Panc1 (cell line): ENCODE measurements at regions of chr10 and their contacts with region 1.

Region 1: GRCh38 chr10:66102756-66103155 is 823.1 kb upstream of the LRRTM3 start:
- DNase-seq: no peak
- ATAC-seq: no peak
- H3K4me3 ChIP-seq: no peak overlapping the region
- H3K27ac ChIP-seq: no peak overlapping the region
- H3K4me1 ChIP-seq: no peaks in the 10 kb centered on the region
- H3K27me3 ChIP-seq: no peaks in the 10 kb centered on the region
- CTCF ChIP-seq: no peak

Region 2: GRCh38 chr10:66058594-66058993 is 44.2 kb before region 1 on chr10:
- CTCF ChIA-PET with region 1: interaction called, 10 read pairs
- POLR2A ChIA-PET with region 1: no interaction called
- in situ Hi-C with region 1: no loop called
- intact Hi-C with region 1: no loop called
- DNase-seq: no peak
- ATAC-seq: no peak
- H3K4me3 ChIP-seq: no peak overlapping the region
- H3K27ac ChIP-seq: no peak overlapping the region
- H3K4me1 ChIP-seq: no peaks in the 10 kb centered on the region
- H3K27me3 ChIP-seq: no peaks in the 10 kb centered on the region
- CTCF ChIP-seq: no peak

Region 3: GRCh38 chr10:66120160-66120559 is 17.4 kb after region 1 on chr10:
- CTCF ChIA-PET with region 1: no interaction called
- POLR2A ChIA-PET with region 1: no interaction called
- in situ Hi-C with region 1: no loop called
- intact Hi-C with region 1: no loop called
- DNase-seq: no peak
- ATAC-seq: no peak
- H3K4me3 ChIP-seq: no peak overlapping the region
- H3K27ac ChIP-seq: no peak overlapping the region
- H3K4me1 ChIP-seq: no peaks in the 10 kb centered on the region
- H3K27me3 ChIP-seq: no peaks in the 10 kb centered on the region
- CTCF ChIP-seq: no peak